Naive thymus-derived CD4-positive, alpha-beta T cell (primary cell): ENCODE measurements at regions of chr13 and their contacts with region 1.

Region 1: GRCh38 chr13:44917589-44918325 is 71.5 kb downstream of the NUFIP1 start:
- DNase-seq: peak; percentile 95 to 98 (median 97)
- ATAC-seq: peak; percentile 85
- H3K4me3 ChIP-seq: peak overlapping the region; percentile 89
- H3K4me3 Mint-ChIP-seq: no peak overlapping the region
- H3K27ac ChIP-seq: peak overlapping the region; percentile 75
- H3K27ac Mint-ChIP-seq: no peak overlapping the region
- H3K4me1 ChIP-seq: peaks cover 5 to 9% of the 10 kb centered on the region in 2 donors
- H3K4me1 Mint-ChIP-seq: peaks cover 2 to 19% (median 7%) of the 10 kb centered on the region in 7 donors
- H3K27me3 ChIP-seq: no peaks in the 10 kb centered on the region
- H3K27me3 Mint-ChIP-seq: peaks cover 0 to 4% (median 0%) of the 10 kb centered on the region in 5 donors

Region 2: DNA sequence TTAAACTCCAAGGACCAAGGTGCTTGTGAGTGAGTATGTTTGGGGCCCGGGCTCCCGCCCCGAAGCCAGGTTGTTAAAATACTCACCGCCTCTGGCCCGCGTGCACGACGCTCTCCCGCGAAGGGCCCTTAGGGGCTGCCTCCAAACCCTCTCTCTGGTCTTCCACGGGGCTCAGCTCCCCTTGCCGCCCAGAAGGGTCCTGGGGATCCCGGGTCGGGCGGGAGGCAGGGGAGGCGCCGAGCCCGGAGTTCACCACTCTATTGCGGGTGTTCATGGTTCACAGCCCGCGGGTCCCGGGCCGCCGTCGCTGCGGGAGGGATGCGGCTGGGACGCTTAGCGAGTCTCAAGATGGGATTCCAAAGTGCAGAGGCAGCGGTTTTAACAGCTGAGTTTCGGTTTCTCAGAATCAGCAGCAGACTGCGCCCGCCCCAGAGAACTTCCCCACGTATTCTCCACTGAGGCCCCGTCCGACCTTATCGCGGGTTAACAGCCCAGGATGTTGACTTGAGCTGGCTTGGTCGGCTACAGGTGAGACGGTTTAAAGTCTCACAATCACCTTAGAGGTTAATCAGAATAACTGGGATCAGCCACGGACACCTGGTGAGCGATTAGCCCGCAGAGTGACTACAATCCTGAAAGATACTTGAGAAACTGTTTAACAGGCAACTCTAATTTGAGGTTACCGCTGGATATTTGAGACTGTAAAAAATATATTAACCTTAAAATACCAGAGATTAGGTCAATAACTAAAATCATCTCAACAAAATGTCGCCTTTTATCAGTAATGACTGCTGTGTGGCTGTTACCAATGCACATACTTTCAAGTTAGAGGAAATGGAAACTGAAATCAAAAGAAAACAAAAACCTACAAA is 1925.6 kb before region 1 on chr13 and contains the start of gene EPSTI1:
- CTCF ChIA-PET with region 1: no interaction called
- POLR2A ChIA-PET with region 1: interaction called, 3 read pairs
- intact Hi-C with region 1: loop called (anchors 2 to 5 kb)
- DNase-seq: peak; percentile 61 to 84 (median 77)
- ATAC-seq: peak; percentile 88
- H3K4me3 ChIP-seq: peak within 1 kb of the TSS; percentile 77
- H3K4me3 Mint-ChIP-seq: peak within 1 kb of the TSS; percentile 92 to 98 (median 96)
- H3K27ac ChIP-seq: peak within 1 kb of the TSS; percentile 94
- H3K27ac Mint-ChIP-seq: peak within 1 kb of the TSS; percentile 99 to 100 (median 100)
- H3K4me1 ChIP-seq: peaks cover 13 to 15% of the 10 kb centered on the region in 2 donors
- H3K4me1 Mint-ChIP-seq: peaks cover 27 to 73% (median 51%) of the 10 kb centered on the region in 7 donors
- H3K27me3 ChIP-seq: no peaks in the 10 kb centered on the region
- H3K27me3 Mint-ChIP-seq: no peaks in the 10 kb centered on the region
- total RNA-seq, gene EPSTI1: 8.4 to 125 (median 11.0) TPM

Region 3: DNA sequence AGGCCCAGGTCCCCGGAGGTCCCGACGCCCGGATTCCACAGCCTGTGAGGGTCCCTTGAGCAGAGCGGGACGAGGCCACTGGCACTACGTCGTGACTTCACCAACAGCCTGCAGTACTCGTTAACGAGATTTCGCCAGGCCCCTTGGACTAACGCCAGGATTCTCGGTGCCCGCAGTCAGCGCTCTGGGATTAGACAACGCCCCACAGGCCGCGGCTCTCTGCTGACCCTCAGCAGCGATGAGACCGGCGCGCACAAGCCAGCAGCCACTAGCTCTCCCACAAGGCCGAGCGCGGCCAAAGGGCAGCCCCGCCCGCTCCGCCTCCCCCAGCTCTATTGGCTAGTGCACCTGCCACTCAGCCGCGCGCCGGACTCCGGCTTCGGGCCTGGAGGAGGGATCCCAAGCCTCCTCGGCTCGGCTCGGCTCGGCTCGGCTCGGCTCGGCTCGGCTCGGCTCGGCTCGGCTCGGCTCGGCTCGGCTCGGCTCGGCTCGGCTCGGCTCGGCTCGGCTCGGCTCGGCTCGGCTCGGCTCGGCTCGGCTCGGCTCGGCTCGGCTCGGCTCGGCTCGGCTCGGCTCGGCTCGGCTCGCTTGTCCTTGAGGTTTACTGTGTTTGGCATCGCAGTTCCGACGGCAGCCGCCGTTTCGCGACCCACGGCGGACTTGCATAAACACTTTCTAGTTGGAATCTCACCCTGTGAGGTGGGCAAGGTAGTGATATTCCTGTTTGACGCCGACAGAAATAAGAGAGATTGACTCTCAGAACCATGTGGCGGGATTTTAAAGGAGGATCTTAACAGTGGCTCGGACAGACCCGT is 775.8 kb before region 1 on chr13:
- CTCF ChIA-PET with region 1: no interaction called
- POLR2A ChIA-PET with region 1: no interaction called
- intact Hi-C with region 1: loop called (anchors 1 kb)
- DNase-seq: peak; percentile 81 to 99 (median 88)
- ATAC-seq: peak; percentile 99
- H3K4me3 ChIP-seq: peak overlapping the region; percentile 89
- H3K4me3 Mint-ChIP-seq: peak overlapping the region; percentile 84 to 97 (median 92)
- H3K27ac ChIP-seq: peak overlapping the region; percentile 82
- H3K27ac Mint-ChIP-seq: peak overlapping the region; percentile 76 to 98 (median 95)
- H3K4me1 ChIP-seq: peaks cover 5% of the 10 kb centered on the region in 2 donors
- H3K4me1 Mint-ChIP-seq: peaks cover 6 to 23% (median 17%) of the 10 kb centered on the region in 7 donors
- H3K27me3 ChIP-seq: peaks cover 0 to 3% of the 10 kb centered on the region in 2 donors
- H3K27me3 Mint-ChIP-seq: peaks cover 0 to 51% (median 7%) of the 10 kb centered on the region in 5 donors

Region 4: DNA sequence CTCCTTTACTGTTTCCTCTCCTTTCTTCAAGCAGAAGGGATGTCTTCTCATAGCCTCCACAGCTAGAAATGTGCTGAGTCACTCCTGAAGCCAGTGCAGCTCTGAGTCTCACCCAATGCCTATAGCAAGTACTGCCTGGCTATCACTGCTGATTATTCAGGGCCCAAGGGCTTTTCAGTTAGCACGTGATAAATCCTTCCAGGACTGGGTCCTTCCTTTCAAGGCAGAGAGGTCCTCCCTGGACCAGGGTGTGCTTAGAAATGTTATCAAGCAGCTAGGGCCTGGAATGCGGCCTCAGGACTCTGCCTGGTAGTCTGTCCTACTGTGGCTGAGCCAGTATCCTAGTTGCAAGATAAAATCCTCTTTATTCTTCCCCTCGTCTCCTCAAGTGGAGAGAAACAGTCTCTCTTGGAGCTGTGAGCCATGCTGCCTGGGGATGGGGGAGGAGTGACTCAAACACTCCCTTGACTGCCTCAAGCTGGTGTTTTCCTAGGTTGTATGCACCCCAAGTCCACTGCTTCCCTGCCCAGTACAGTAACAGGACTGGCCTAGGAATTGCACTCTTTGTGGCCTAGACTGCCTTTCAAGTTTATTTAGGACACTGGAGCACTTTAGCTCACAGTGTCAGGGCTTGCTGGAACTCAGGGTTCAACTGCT is 742.9 kb before region 1 on chr13:
- CTCF ChIA-PET with region 1: no interaction called
- POLR2A ChIA-PET with region 1: no interaction called
- intact Hi-C with region 1: no loop called
- DNase-seq: no peak
- ATAC-seq: no peak
- H3K4me3 ChIP-seq: no peak overlapping the region
- H3K4me3 Mint-ChIP-seq: no peak overlapping the region
- H3K27ac ChIP-seq: no peak overlapping the region
- H3K27ac Mint-ChIP-seq: no peak overlapping the region
- H3K4me1 ChIP-seq: no peaks in the 10 kb centered on the region
- H3K4me1 Mint-ChIP-seq: no peaks in the 10 kb centered on the region
- H3K27me3 ChIP-seq: no peaks in the 10 kb centered on the region
- H3K27me3 Mint-ChIP-seq: peaks cover 0 to 8% (median 0%) of the 10 kb centered on the region in 5 donors

Region 5: DNA sequence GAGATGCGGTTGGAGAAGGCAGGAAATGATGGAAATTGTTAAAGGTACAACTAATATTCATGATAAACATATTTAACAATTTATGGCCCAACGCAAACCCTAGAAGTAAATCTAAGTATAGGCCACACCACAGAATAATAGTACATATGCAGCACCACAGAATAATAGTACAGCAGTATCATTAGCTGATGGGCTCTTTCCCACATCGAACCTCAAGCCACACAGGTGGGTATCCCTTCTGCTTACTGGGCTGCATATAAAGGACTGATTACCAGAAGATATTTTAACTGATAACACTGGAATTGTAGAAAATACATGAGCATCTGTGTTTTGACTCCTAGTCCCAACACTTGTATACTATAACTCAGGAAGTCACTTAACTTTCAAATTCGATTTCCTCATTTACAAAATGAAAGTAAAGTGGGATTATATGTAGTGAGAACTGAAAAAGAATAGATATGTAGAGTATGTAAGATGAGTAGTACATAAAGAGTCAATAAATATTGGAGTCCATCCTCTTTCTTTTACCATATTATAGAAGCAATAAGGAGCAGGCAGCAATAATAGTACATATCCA is 433.1 kb before region 1 on chr13:
- CTCF ChIA-PET with region 1: interaction called, 3 read pairs
- POLR2A ChIA-PET with region 1: no interaction called
- intact Hi-C with region 1: loop called (anchors 1 kb)
- DNase-seq: no peak
- ATAC-seq: no peak
- H3K4me3 ChIP-seq: peak overlapping the region; percentile 38
- H3K4me3 Mint-ChIP-seq: peak overlapping the region; percentile 13 to 77 (median 72)
- H3K27ac ChIP-seq: peak overlapping the region; percentile 22
- H3K27ac Mint-ChIP-seq: peak overlapping the region in 8 of 9 donors; percentile 1 to 73 (median 52)
- H3K4me1 ChIP-seq: peaks cover 7 to 16% of the 10 kb centered on the region in 2 donors
- H3K4me1 Mint-ChIP-seq: peaks cover 6 to 25% (median 14%) of the 10 kb centered on the region in 7 donors
- H3K27me3 ChIP-seq: no peaks in the 10 kb centered on the region
- H3K27me3 Mint-ChIP-seq: no peaks in the 10 kb centered on the region

Region 6: GRCh38 chr13:44591316-44591715 is 326.4 kb before region 1 on chr13:
- CTCF ChIA-PET with region 1: no interaction called
- POLR2A ChIA-PET with region 1: no interaction called
- intact Hi-C with region 1: no loop called
- DNase-seq: no peak
- ATAC-seq: no peak
- H3K4me3 ChIP-seq: no peak overlapping the region
- H3K4me3 Mint-ChIP-seq: no peak overlapping the region
- H3K27ac ChIP-seq: no peak overlapping the region
- H3K27ac Mint-ChIP-seq: no peak overlapping the region
- H3K4me1 ChIP-seq: no peaks in the 10 kb centered on the region
- H3K4me1 Mint-ChIP-seq: no peaks in the 10 kb centered on the region
- H3K27me3 ChIP-seq: no peaks in the 10 kb centered on the region
- H3K27me3 Mint-ChIP-seq: peaks cover 7 to 28% (median 24%) of the 10 kb centered on the region in 5 donors

Region 7: GRCh38 chr13:44988973-44989817 is 71.4 kb after region 1 on chr13 and contains the starts of genes GPALPP1 and NUFIP1:
- CTCF ChIA-PET with region 1: interaction called, 4 read pairs
- POLR2A ChIA-PET with region 1: interaction called, 3 read pairs
- intact Hi-C with region 1: loop called (anchors 1 kb)
- DNase-seq: peak; percentile 79 to 94 (median 90)
- ATAC-seq: peak; percentile 98
- H3K4me3 ChIP-seq: peak within 1 kb of the TSS; percentile 94
- H3K4me3 Mint-ChIP-seq: peak within 1 kb of the TSS; percentile 96 to 100 (median 98)
- H3K27ac ChIP-seq: peak within 1 kb of the TSS; percentile 95
- H3K27ac Mint-ChIP-seq: peak within 1 kb of the TSS; percentile 91 to 99 (median 98)
- H3K4me1 ChIP-seq: peaks cover 18 to 27% of the 10 kb centered on the region in 2 donors
- H3K4me1 Mint-ChIP-seq: peaks cover 42 to 81% (median 68%) of the 10 kb centered on the region in 7 donors
- H3K27me3 ChIP-seq: no peaks in the 10 kb centered on the region
- H3K27me3 Mint-ChIP-seq: no peaks in the 10 kb centered on the region
- total RNA-seq, gene GPALPP1: 29.7 to 43.1 (median 33.0) TPM
- total RNA-seq, gene NUFIP1: 3.7 to 6.6 (median 5.4) TPM

Region 8: GRCh38 chr13:45162821-45163220 is 245.1 kb after region 1 on chr13:
- CTCF ChIA-PET with region 1: no interaction called
- POLR2A ChIA-PET with region 1: no interaction called
- intact Hi-C with region 1: no loop called
- DNase-seq: no peak
- ATAC-seq: no peak
- H3K4me3 ChIP-seq: no peak overlapping the region
- H3K4me3 Mint-ChIP-seq: no peak overlapping the region
- H3K27ac ChIP-seq: no peak overlapping the region
- H3K27ac Mint-ChIP-seq: no peak overlapping the region
- H3K4me1 ChIP-seq: no peaks in the 10 kb centered on the region
- H3K4me1 Mint-ChIP-seq: peaks cover 0 to 5% (median 0%) of the 10 kb centered on the region in 7 donors
- H3K27me3 ChIP-seq: no peaks in the 10 kb centered on the region
- H3K27me3 Mint-ChIP-seq: no peaks in the 10 kb centered on the region

Region 9: DNA sequence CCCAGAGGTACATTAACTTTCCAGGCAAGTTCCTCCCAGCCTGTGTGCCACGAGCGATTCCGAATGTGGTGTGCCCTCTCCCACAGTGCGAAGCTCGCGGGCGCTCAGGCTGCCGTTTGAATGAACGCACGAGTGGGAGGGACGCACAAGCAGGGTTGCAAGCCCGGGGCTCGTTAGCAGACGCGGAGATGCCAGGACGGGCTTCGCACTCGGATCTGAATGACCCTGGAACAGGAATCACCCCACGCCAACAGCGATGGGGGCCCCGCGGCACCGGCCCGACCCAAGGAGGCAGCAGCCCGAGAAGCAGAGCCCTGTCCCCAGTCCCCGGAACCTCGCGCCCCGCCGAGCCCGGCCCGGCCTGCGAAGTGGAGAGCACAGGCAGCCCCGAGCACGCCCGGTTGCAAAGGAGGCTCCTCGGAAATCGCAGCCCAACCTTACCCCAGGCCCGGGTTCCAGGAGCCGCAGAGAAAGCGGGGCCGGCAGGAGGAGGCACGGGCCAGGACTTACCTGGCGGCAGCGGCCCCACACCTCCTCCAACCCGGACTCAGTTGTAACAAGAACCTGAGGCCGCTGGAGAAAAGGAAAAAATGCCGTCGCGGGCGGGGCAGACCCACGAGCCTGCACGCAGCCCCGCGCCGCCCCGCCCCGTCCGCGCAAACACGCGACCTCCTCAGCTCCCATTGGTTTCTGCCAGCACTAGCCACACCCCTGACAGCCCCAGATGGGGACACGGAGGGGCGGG is 500.2 kb after region 1 on chr13 and contains the start of gene SLC25A30:
- CTCF ChIA-PET with region 1: no interaction called
- POLR2A ChIA-PET with region 1: no interaction called
- intact Hi-C with region 1: loop called (anchors 1 to 5 kb)
- DNase-seq: peak; percentile 73 to 90 (median 87)
- ATAC-seq: peak; percentile 97
- H3K4me3 ChIP-seq: peak within 1 kb of the TSS; percentile 97
- H3K4me3 Mint-ChIP-seq: peak within 1 kb of the TSS; percentile 90 to 98 (median 96)
- H3K27ac ChIP-seq: peak within 1 kb of the TSS; percentile 79
- H3K27ac Mint-ChIP-seq: peak within 1 kb of the TSS; percentile 92 to 99 (median 96)
- H3K4me1 ChIP-seq: peaks cover 4 to 21% of the 10 kb centered on the region in 2 donors
- H3K4me1 Mint-ChIP-seq: peaks cover 0 to 36% (median 27%) of the 10 kb centered on the region in 7 donors
- H3K27me3 ChIP-seq: no peaks in the 10 kb centered on the region
- H3K27me3 Mint-ChIP-seq: no peaks in the 10 kb centered on the region
- total RNA-seq, gene SLC25A30: 13.3 to 29.4 (median 23.6) TPM

Region 10: DNA sequence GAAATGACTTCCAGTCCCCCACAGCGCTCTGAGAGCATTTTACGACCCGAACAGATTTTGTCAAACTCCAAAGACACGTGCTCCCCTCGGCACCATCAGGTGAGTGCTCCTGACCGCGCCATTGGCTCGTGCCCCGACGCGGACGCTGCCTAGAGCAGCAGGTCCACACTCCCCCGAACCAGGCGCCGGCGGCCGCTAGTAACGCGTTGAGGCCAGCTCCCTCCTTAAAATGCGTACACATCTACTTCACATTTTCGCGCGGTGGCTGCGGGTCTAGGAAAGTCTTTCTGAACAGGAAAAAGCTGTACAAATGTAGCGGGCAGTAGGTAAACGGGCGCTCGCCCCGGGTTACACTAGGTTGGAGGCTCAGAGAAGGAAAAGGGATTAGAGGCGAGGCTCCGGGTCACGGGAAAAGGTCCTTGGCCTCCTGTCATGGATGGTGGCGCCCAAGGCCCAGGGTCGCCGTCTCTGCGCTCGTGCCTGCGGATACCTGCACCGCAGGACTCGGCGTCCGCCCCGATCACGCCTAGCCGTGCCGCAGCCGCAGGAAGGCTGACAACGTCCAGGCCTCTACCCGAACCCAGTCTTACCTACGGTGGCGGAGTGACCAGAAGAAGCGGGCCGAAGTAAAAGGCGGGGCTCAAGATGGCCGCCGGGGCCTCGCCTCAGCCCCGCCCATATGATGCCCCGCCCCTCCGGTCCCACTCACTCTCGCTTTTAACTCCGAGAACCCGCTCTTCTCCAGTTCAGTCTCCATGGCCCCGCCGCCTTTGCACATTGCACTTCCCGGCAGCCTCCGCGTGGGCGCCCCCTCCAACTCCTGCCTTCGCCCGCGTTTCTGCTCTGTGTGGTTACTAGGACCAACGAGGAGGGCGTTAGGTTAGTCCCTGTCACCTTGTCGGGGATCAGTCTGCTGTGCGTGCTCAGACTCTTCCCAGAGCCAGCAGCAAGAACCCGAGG is 1879.0 kb after region 1 on chr13 and contains the start of gene ESD:
- CTCF ChIA-PET with region 1: no interaction called
- POLR2A ChIA-PET with region 1: no interaction called
- intact Hi-C with region 1: loop called in 1 of 2 experiments (anchors 1 kb)
- DNase-seq: peak; percentile 75 to 92 (median 85)
- ATAC-seq: peak; percentile 97
- H3K4me3 ChIP-seq: peak within 1 kb of the TSS; percentile 85
- H3K4me3 Mint-ChIP-seq: peak within 1 kb of the TSS; percentile 91 to 99 (median 93)
- H3K27ac ChIP-seq: peak within 1 kb of the TSS; percentile 82
- H3K27ac Mint-ChIP-seq: peak within 1 kb of the TSS; percentile 92 to 99 (median 98)
- H3K4me1 ChIP-seq: peaks cover 14 to 33% of the 10 kb centered on the region in 2 donors
- H3K4me1 Mint-ChIP-seq: peaks cover 20 to 53% (median 48%) of the 10 kb centered on the region in 7 donors
- H3K27me3 ChIP-seq: no peaks in the 10 kb centered on the region
- H3K27me3 Mint-ChIP-seq: peaks cover 0 to 7% (median 0%) of the 10 kb centered on the region in 5 donors
- total RNA-seq, gene ESD: 35.3 to 80.1 (median 57.0) TPM